ENCODE measurements at regions of chr9 and their contacts with region 1.

Region 1: GRCh38 chr9:2727966-2728613 is 10.8 kb downstream of the KCNV2 start:
- DNase-seq: no peak
- H3K4me3 Mint-ChIP-seq: no peak overlapping the region
- H3K27ac Mint-ChIP-seq: no peak overlapping the region
- H3K4me1 Mint-ChIP-seq: no peaks in the 10 kb centered on the region
- H3K27me3 Mint-ChIP-seq: no peaks in the 10 kb centered on the region

Region 2: GRCh38 chr9:2132484-2133082 is 595.5 kb before region 1 on chr9:
- CTCF ChIA-PET with region 1: interaction called, 11 read pairs
- DNase-seq: no peak
- H3K4me3 Mint-ChIP-seq: no peak overlapping the region
- H3K27ac Mint-ChIP-seq: no peak overlapping the region
- H3K4me1 Mint-ChIP-seq: peaks cover 17% of the 10 kb centered on the region
- H3K27me3 Mint-ChIP-seq: no peaks in the 10 kb centered on the region

Region 3: GRCh38 chr9:2473681-2474080 is 254.4 kb before region 1 on chr9:
- CTCF ChIA-PET with region 1: interaction called, 10 read pairs
- DNase-seq: no peak
- H3K4me3 Mint-ChIP-seq: no peak overlapping the region
- H3K27ac Mint-ChIP-seq: no peak overlapping the region
- H3K4me1 Mint-ChIP-seq: no peaks in the 10 kb centered on the region
- H3K27me3 Mint-ChIP-seq: no peaks in the 10 kb centered on the region

Region 4: DNA sequence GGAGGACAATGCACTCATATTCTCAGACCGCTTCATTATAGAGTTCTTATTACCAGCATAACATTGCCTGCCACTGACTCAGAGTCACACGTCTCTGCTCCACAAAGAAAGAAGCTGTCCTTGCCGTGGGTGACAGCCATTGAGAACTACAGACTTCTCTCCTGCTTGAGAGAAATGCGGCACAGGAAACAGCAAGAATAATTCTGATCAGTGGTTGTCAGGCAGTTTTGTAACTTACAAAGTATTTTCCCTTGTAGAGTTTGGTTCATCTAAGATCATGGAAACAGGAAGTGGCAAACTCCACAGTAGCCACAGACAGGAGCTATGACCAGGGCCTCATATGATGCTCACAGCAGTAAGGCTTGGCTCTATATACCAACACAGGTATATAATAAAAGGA is 36.3 kb after region 1 on chr9:
- CTCF ChIA-PET with region 1: no interaction called
- DNase-seq: peak; percentile 62
- H3K4me3 Mint-ChIP-seq: no peak overlapping the region
- H3K27ac Mint-ChIP-seq: peak overlapping the region; percentile 88
- H3K4me1 Mint-ChIP-seq: peaks cover 33% of the 10 kb centered on the region
- H3K27me3 Mint-ChIP-seq: no peaks in the 10 kb centered on the region

Measured in activated naive CD4-positive, alpha-beta T cell treated with anti-CD3 and anti-CD28 coated beads, Interleukin-2, amount 10 ng/mL, durations not matched to agents 7 days and 5 days (primary cell).